HEK293T (cell line): ENCODE measurements at regions of chr5 and their contacts with region 1.

Region 1: GRCh38 chr5:147203213-147203612 is 31.6 kb upstream of the STK32A start:
- DNase-seq: no peak

Region 2: DNA sequence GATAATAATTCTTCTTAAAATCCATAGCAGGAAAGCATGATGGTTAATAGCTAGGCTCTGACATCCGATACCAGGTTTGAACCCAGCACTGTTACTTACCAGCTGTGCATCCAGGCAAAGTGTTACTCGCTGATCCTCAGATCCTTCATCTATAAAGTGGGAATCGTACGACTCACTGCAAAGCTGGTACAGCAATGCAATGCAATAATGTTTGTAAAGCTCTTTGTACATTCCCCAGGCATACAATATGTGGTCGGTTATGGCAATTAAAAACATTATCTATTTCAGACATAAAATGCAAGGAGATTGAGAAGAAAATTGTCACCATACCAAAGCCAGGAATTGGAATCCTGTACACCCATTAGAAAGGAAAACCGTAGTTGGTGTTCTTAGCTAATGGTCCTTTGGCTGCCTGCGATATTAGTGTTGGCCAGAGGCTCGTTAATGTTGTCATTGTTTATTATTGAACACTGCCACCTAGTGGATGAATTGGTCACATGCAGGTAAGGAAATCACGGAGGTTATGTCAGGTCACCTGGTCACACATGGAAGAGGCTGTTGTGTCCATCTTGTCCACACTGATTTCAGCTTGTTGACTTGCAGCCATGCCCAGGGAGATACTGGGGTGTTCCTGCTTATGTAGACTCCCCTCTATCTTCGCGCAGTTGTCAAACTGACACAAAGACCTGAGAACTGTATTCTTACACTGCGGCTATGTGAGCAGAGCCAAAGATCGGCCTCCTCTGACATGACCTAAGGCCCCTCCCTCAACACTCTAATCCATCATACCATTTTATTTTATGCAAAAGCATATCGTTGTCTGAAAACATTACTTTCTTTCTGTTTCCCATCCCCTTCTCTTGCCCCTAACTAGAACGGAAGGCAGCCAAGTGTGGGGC is 237.2 kb before region 1 on chr5:
- CTCF ChIA-PET with region 1: no interaction called
- POLR2A ChIA-PET with region 1: no interaction called
- DNase-seq: peak; percentile 68

Region 3: GRCh38 chr5:147290261-147290660 is 87.0 kb after region 1 on chr5:
- CTCF ChIA-PET with region 1: interaction called, 12 read pairs
- POLR2A ChIA-PET with region 1: no interaction called
- DNase-seq: no peak